ENCODE measurements at regions of chr7 and their contacts with region 1.

Region 1: GRCh38 chr7:143416565-143417149 is 8.0 kb upstream of the EPHA1 start:
- DNase-seq: no peak
- ATAC-seq: peak; percentile 45
- H3K4me3 Mint-ChIP-seq: no peak overlapping the region
- H3K27ac Mint-ChIP-seq: no peak overlapping the region
- H3K4me1 Mint-ChIP-seq: peaks cover 8% of the 10 kb centered on the region
- H3K27me3 Mint-ChIP-seq: no peaks in the 10 kb centered on the region

Region 2: DNA sequence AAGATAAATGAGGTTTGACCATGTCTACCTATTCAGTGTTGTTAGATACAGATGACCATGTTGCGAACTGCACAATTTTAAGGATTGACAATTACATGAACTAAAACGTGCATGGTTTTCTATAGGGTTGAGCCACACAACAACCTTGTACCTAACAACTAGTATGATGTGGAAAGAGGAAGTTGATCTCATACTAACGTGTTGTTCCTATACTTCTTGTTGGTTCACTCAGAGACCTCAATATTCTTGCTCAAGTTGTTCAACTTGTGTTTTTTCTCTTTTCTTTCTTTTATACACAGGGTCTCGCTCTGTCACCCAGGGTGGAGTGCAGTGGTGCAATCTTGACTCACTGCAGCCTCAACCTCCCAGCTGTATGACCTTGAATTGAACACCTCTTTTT is 448.4 kb before region 1 on chr7:
- CTCF ChIA-PET with region 1: no interaction called
- POLR2A ChIA-PET with region 1: no interaction called
- intact Hi-C with region 1: no loop called
- DNase-seq: no peak
- ATAC-seq: no peak
- H3K4me3 Mint-ChIP-seq: no peak overlapping the region
- H3K27ac Mint-ChIP-seq: no peak overlapping the region
- H3K4me1 Mint-ChIP-seq: no peaks in the 10 kb centered on the region
- H3K27me3 Mint-ChIP-seq: peaks cover 25% of the 10 kb centered on the region

Region 3: GRCh38 chr7:143305423-143306070 is 111.1 kb before region 1 on chr7:
- CTCF ChIA-PET with region 1: interaction called, 5 read pairs
- POLR2A ChIA-PET with region 1: no interaction called
- intact Hi-C with region 1: loop called in 1 of 2 experiments (anchors 5 kb)
- DNase-seq: peak; percentile 87
- ATAC-seq: peak; percentile 85
- H3K4me3 Mint-ChIP-seq: no peak overlapping the region
- H3K27ac Mint-ChIP-seq: peak overlapping the region; percentile 52
- H3K4me1 Mint-ChIP-seq: peaks cover 48% of the 10 kb centered on the region
- H3K27me3 Mint-ChIP-seq: no peaks in the 10 kb centered on the region

Region 4: DNA sequence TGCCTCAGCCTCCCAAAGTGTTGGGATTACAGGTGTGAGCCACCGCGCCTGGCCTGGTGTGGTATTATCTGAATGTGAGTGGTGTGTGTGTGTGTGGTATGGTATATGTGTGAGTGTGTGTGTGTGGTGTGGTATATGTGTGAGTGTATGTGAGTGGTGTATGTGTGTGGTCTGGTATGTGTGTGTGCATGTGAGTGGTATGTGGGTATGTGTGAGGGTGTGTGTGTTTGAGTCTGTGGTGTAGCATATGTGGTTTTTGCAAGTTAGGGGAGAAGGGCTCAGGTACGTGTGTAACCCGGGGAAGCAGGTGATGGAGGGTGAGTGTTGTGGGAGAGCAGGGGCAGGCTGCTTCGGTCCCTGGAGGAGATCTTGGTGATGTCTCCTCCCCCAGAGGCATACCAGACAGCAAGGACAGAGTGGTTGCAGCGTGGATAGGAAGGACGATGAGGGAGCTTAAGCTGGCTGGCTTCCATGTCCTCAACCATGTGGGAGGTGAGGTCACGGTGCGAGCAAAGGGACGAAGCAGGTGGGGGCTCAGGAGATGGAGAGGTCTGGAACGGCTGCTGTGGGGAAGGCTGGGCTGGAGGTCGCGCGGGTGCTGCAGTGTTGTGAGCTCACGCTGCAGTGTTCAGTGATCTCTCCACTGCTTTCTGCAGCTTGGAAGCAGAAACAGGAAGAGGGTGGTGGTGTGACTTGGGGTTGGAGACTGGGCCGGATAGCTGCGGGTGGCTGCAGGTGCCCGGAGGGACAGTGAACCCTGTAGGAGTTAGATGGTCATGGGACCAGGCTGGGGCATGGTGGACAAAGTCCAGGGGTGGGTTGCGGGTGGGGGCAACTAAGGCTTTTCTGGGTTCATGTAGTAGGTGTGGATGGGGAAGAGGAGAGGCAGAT is 30.5 kb before region 1 on chr7:
- CTCF ChIA-PET with region 1: interaction called, 10 read pairs
- POLR2A ChIA-PET with region 1: no interaction called
- intact Hi-C with region 1: loop called in 1 of 2 experiments (anchors 2 kb)
- DNase-seq: peak; percentile 56
- ATAC-seq: peak; percentile 57
- H3K4me3 Mint-ChIP-seq: no peak overlapping the region
- H3K27ac Mint-ChIP-seq: no peak overlapping the region
- H3K4me1 Mint-ChIP-seq: peaks cover 11% of the 10 kb centered on the region
- H3K27me3 Mint-ChIP-seq: no peaks in the 10 kb centered on the region

Measured in activated CD4-positive, alpha-beta T cell treated with anti-CD3 and anti-CD28 coated beads for 36 hours (primary cell).